Left cardiac atrium (tissue), 4 donors: ENCODE measurements at regions of chr3 and their contacts with region 1.

Region 1: GRCh38 chr3:194070634-194071409 is 65.1 kb upstream of the HES1 start:
- DNase-seq: peak; percentile 91
- ATAC-seq: peak; percentile 91 to 92

Region 2: GRCh38 chr3:194009892-194010533 is 60.8 kb before region 1 on chr3:
- intact Hi-C with region 1: loop called in 1 of 2 experiments (anchors 10 kb)
- DNase-seq: no peak
- ATAC-seq: no peak

Region 3: GRCh38 chr3:194486540-194487288 is 415.9 kb after region 1 on chr3 and contains the start of gene ATP13A3:
- intact Hi-C with region 1: no loop called
- DNase-seq: peak; percentile 92
- ATAC-seq: peak; percentile 86 to 94
- total RNA-seq, gene ATP13A3: 86.7 to 182 TPM